ENCODE measurements at regions of chr1 and their contacts with region 1.

Region 1: DNA sequence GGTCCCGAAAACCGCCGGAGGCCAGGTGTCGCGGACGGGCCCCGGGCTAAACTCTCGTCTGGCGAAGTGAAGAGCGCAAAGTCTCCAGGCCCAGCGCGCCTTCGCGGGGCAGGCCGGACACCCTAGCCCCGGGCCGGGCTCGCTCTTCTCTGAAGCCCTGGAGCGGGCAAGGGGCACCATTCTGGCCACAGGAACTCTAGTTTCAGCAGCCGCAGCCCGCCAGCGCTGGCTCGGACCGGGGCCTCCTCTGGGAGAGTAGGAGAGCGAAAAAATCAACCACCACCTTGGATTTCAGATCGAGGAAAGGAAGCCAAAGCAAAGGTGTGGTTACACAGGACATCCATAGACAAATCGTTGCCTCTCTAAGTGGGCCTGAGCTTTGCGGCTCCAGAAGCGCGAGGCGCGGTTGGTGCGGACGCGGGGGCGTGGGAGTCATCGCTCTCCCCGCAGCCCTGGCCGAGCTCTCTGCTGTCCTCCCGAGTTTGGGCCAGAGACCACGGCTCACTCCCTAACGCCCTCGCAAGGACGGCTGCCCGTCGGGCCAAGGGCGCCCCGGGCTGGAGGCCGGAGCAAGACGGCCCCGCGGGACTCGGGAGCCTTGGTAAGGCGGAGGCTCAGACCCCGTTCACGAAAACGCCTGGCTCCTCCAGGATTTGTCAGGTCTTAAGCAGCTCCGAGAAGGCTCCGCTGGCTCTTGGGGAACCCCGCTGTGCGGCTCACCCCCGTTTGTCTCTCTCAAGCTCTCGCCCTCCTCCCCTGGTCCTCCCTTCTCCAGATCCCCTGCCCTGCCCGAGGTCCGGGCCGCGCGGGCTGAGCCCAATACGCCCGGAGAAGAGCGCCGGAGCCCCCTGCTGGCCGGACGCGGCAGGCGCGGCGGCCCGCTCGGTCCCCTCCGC is 132.9 kb upstream of the DPYD start:
- DNase-seq: no peak
- H3K4me3 ChIP-seq: peak overlapping the region; percentile 53
- CTCF ChIP-seq: peak; percentile 76

Region 2: DNA sequence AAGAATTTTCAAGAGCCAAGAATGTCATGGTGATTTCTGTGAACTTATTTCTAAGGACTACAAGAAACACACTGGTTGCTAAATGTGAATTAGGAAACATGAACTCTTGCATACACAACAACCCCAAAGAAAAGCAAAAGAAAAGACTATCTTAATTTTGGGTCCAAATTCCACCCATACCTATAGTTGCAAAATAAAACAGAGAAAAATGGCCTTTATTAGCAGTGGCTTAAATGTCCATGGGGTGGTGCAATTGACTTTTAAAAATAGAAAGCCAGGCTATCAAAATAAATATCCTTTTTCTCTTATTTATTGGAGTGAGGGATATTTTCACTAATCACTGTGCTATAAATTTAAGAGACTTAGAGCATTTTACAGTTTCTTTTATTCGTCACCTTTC is 52.0 kb before region 1 on chr1:
- CTCF ChIA-PET with region 1: interaction called, 45 read pairs
- POLR2A ChIA-PET with region 1: no interaction called
- DNase-seq: no peak
- H3K4me3 ChIP-seq: no peak overlapping the region
- CTCF ChIP-seq: no peak

Region 3: DNA sequence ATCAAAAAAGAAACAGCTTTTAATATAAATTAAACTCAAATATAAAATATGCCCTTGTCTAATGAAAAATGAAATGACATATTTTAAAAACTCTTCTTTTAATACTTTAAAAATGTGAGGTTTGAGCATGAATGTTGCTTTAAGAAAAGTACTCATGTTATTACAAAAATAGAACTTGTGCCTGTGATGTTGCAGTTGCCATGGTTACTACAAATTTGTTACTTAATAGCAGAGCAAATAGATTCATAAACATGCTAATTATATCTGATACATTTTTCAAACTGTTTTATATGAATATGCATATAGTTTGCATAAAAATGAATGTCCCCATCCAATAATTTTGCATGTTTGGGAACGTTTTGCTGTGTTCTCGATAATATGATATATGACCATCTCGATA is 19.4 kb after region 1 on chr1:
- CTCF ChIA-PET with region 1: interaction called, 26 read pairs
- POLR2A ChIA-PET with region 1: no interaction called
- DNase-seq: no peak
- H3K4me3 ChIP-seq: no peak overlapping the region
- CTCF ChIP-seq: no peak

Region 4: DNA sequence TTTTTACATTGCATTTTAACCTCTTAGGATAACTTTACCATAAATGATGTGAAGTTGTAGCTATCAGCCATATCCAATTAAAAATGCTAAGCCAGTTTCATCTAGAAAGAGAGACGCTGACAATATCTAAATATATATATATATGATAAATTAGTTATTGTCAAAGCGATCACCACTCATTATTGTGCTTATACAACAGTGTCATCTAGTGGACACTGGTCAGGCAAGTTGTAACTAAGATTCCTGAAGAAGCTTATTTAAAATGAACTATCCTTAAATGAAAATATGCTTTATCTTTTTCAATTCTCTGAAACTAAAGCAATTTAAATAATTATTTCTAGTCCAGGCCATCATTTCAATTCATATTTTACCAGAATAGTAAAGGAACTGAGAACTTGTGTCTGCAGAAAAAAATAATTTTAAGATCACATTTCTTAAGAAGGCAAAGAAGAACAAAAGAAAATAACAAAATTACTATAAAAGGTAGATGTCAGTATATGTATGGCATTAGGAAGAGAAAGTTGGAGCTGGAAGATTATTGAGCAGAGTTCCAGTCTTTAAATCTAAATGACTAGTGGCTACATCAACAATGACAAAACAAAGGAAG is 414.5 kb after region 1 on chr1:
- CTCF ChIA-PET with region 1: interaction called, 117 read pairs
- POLR2A ChIA-PET with region 1: no interaction called
- DNase-seq: peak; percentile 21
- H3K4me3 ChIP-seq: no peak overlapping the region
- CTCF ChIP-seq: peak; percentile 56